K562 (cell line): ENCODE measurements at regions of chr20 and their contacts with region 1.

Region 1: DNA sequence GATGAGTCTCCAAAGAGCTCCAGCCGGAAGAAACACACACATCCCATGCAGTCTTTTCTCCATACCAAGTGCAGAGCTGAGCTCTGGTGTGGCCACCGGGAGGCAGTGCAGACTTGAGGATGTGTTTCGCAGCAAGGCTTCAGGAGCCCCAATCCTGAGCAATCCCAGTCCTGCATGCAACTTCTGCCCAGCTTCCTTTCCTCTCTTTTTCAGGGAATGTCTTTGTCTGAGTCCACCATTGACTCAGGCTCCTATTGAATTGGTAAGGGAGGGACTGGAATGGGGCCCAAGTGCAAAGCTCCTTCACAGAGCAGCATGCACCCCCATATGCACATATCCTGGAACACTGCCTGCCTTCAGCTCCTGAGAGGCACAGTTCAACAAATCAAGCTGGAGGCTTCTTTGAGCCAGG is 50.5 kb upstream of the ASIP start:
- DNase-seq: peak; percentile 61 to 81 (median 72)
- ATAC-seq: peak; percentile 96
- H3K4me3 ChIP-seq: no peak overlapping the region
- H3K27ac ChIP-seq: no peak overlapping the region
- H3K4me1 ChIP-seq: peaks cover 5 to 12% of the 10 kb centered on the region in 2 experiments; a peak in 3 of 5 replicates
- H3K27me3 ChIP-seq: peaks cover 4 to 6% of the 10 kb centered on the region in 2 experiments; a peak in 1 of 5 replicates
- CTCF ChIP-seq: peak; percentile 79 to 95 (median 89)
- EP300 ChIP-seq: no peak
- POLR2A ChIP-seq: no peak
- RAD21 ChIP-seq: peak; percentile 83 to 91

Region 2: DNA sequence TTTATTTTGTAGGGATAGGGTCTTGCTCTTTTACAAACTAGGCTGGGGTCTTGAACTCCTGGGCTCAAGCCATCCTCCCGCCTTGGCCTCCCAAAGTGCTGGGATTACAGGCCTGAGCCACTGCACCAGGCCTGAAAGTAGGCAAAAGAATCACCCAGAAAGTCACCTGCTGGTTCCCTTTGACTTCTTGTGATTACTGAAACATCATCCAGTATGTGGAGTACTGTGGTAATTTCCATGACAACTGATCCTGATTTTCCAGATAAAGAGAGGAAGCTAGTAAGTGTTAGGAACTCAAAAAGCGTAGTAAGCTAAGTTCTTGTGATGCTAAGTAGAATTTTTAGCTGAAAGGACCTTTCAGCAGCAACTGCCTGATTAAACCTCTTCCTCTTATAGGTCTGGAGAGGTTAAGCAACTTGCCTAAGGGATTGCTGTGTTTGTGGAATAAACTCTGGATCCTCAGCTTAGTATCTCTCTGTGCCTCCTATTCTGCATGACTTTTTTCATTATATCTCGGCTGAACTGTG is 180.2 kb before region 1 on chr20:
- CTCF ChIA-PET with region 1: no interaction called
- POLR2A ChIA-PET with region 1: no interaction called
- in situ Hi-C with region 1: no loop called
- intact Hi-C with region 1: no loop called
- DNase-seq: no peak
- ATAC-seq: no peak
- H3K4me3 ChIP-seq: no peak overlapping the region
- H3K27ac ChIP-seq: no peak overlapping the region
- H3K4me1 ChIP-seq: peaks cover 8 to 33% of the 10 kb centered on the region in 2 experiments; a peak in 3 of 5 replicates
- H3K27me3 ChIP-seq: no peaks in the 10 kb centered on the region
- CTCF ChIP-seq: no peak
- EP300 ChIP-seq: no peak
- POLR2A ChIP-seq: no peak
- RAD21 ChIP-seq: no peak

Region 3: DNA sequence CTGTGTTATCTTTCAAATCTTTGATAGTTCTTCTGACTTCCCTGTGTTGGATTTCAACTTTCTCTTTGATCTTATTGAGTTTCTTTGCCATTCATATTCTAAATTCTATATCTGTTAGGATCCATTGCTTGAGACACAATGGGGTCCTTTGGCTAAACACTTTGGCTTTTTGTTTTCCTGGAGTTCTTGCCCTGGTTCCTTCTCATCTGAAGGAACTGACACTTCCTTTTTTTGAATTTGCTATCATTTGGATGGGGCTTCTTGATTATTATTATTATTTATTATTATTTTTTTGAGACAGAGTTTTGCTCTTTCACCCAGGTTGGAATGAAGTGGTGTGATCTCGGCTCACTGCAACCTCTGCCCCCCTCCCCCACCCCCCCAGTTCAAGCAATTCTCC is 48.6 kb before region 1 on chr20:
- CTCF ChIA-PET with region 1: no interaction called
- POLR2A ChIA-PET with region 1: no interaction called
- in situ Hi-C with region 1: no loop called
- intact Hi-C with region 1: loop called (anchors 1 kb)
- DNase-seq: no peak
- ATAC-seq: no peak
- H3K4me3 ChIP-seq: no peak overlapping the region
- H3K27ac ChIP-seq: no peak overlapping the region
- H3K4me1 ChIP-seq: peaks cover 4 to 6% of the 10 kb centered on the region in 2 experiments; a peak in 2 of 5 replicates
- H3K27me3 ChIP-seq: no peaks in the 10 kb centered on the region
- CTCF ChIP-seq: no peak
- EP300 ChIP-seq: no peak
- POLR2A ChIP-seq: no peak
- RAD21 ChIP-seq: no peak

Region 4: GRCh38 chr20:34302723-34303528 is 112.2 kb after region 1 on chr20 and contains the start of gene AHCY:
- CTCF ChIA-PET with region 1: no interaction called
- POLR2A ChIA-PET with region 1: no interaction called
- in situ Hi-C with region 1: no loop called
- intact Hi-C with region 1: loop called (anchors 2 kb)
- DNase-seq: peak; percentile 89 to 99 (median 91)
- ATAC-seq: peak; percentile 97
- H3K4me3 ChIP-seq: peak within 1 kb of the TSS; percentile 96
- H3K27ac ChIP-seq: peak within 1 kb of the TSS; percentile 92
- H3K4me1 ChIP-seq: peaks cover 22 to 34% of the 10 kb centered on the region in 2 experiments
- H3K27me3 ChIP-seq: no peaks in the 10 kb centered on the region
- CTCF ChIP-seq: no peak
- EP300 ChIP-seq: no peak
- POLR2A ChIP-seq: peak; percentile 91
- RAD21 ChIP-seq: no peak
- polyA plus RNA-seq, gene AHCY: 82.5 to 148 TPM

Region 5: DNA sequence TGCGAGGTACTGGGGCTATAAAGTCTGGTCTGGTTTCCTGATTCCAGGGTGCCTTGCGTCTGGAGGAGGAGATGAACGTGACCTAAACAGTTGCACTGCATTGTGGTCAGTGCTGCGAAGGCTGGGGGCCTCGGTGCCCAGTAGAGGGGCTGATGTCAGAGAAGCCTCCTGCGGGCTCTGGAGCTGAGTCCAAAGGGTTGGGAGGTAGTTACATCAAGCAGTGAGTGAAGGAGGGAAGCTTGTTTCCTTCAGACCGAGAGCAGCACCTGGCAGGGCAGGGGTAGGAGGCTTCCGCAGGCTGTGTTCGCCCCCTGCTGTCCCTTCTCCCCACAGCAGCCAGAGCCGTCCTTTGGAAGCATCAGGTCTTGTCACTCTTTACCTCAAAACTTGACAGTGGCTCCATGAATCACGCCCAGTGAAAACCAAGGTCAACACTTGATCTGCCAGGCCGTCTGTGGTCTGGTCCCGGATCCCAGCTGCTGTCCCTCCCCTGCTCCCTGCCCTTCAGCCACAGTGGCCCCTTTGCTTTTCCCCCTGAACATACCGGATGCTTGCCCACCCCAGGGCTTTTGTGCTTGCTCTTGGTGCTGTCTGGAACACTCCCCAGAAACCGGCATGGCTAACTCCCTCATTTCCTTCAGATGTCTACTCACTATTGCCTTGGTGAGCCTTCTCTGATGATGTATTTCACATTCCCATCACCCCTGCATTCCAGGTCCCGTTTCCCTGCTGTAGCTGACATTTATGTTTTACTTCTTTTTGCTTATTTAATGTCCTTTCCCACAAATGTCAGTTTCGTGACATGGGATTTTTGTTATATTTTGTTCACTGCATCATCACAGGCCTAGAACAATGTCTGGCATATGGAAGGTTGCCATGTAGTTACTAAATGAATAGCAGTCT is 332.5 kb after region 1 on chr20:
- CTCF ChIA-PET with region 1: no interaction called
- POLR2A ChIA-PET with region 1: no interaction called
- in situ Hi-C with region 1: loop called (anchors 10 kb)
- intact Hi-C with region 1: loop called (anchors 2 kb)
- DNase-seq: peak; percentile 37 to 70 (median 60)
- ATAC-seq: peak; percentile 99
- H3K4me3 ChIP-seq: no peak overlapping the region
- H3K27ac ChIP-seq: no peak overlapping the region
- H3K4me1 ChIP-seq: peaks cover 15 to 17% of the 10 kb centered on the region in 2 experiments
- H3K27me3 ChIP-seq: no peaks in the 10 kb centered on the region
- CTCF ChIP-seq: peak; percentile 84 to 85 (median 85)
- EP300 ChIP-seq: no peak
- POLR2A ChIP-seq: no peak
- RAD21 ChIP-seq: peak; percentile 51 to 89

Region 6: GRCh38 chr20:34704177-34705007 is 513.7 kb after region 1 on chr20 and contains the start of gene TP53INP2:
- CTCF ChIA-PET with region 1: no interaction called
- POLR2A ChIA-PET with region 1: no interaction called
- in situ Hi-C with region 1: no loop called
- intact Hi-C with region 1: loop called (anchors 5 kb)
- DNase-seq: peak; percentile 95 to 96 (median 95)
- ATAC-seq: peak; percentile 76
- H3K4me3 ChIP-seq: peak within 1 kb of the TSS; percentile 92
- H3K27ac ChIP-seq: peak within 1 kb of the TSS; percentile 92
- H3K4me1 ChIP-seq: peaks cover 16 to 28% of the 10 kb centered on the region in 2 experiments
- H3K27me3 ChIP-seq: no peaks in the 10 kb centered on the region
- CTCF ChIP-seq: no peak
- EP300 ChIP-seq: no peak
- POLR2A ChIP-seq: 0 out of 2 replicates have a peak, but pooled peaks have one; percentile 42
- RAD21 ChIP-seq: no peak
- polyA plus RNA-seq, gene TP53INP2: 1.0 to 1.1 TPM